CD8-positive, alpha-beta T cell (primary cell): ENCODE measurements at regions of chr17 and their contacts with region 1.

Region 1: DNA sequence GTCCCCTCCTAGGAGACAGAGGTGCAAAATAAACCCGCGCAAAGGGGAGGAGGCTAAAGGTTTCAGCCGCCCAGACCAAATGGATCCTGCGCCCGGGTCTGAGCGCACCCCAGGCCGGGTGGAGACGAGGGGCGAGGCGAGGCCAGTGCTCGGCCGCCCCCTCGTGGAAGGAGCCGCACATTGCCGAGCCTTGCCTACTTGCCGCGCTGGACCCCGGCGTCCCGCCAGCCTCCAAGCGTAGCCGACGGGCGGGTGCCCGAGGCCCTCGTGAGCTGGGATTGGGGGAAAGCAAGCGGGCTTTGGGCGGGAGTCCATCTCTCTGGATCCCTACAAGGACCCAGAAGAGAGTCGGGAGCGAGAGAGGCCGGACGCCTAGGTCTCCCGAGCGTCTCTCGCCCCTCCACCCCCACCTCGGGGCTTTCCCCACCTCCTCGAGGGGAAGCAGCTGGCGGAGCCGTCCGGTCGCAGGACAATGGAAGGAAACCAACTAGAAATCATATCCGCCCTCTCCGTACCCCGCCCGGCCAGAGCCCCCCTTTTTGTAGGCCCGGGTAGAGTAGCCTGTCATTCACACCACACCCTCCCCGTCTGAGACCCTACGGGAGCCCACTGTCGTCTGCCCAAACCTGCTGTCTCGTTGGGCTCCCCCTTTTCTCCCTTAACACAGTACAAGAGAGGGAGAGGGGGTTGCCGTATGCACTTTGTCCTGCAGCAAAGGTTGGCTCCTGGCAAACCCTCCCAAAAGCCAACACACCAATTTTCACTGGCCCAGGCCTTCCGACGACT is 664 bp upstream of the BCL6B start:
- DNase-seq: peak; percentile 58 to 88 (median 76)
- ATAC-seq: peak; percentile 61
- H3K4me3 ChIP-seq: peak overlapping the region; percentile 17 to 41
- H3K4me3 Mint-ChIP-seq: peak overlapping the region; percentile 74
- H3K27ac ChIP-seq: peak overlapping the region in 1 of 2 experiments; percentile 46
- H3K27ac Mint-ChIP-seq: peak overlapping the region; percentile 37
- H3K4me1 ChIP-seq: peaks cover 42% of the 10 kb centered on the region
- H3K4me1 Mint-ChIP-seq: peaks cover 46% of the 10 kb centered on the region
- H3K27me3 ChIP-seq: no peaks in the 10 kb centered on the region
- H3K27me3 Mint-ChIP-seq: peaks cover 3% of the 10 kb centered on the region
- CTCF ChIP-seq: peak; percentile 98

Region 2: DNA sequence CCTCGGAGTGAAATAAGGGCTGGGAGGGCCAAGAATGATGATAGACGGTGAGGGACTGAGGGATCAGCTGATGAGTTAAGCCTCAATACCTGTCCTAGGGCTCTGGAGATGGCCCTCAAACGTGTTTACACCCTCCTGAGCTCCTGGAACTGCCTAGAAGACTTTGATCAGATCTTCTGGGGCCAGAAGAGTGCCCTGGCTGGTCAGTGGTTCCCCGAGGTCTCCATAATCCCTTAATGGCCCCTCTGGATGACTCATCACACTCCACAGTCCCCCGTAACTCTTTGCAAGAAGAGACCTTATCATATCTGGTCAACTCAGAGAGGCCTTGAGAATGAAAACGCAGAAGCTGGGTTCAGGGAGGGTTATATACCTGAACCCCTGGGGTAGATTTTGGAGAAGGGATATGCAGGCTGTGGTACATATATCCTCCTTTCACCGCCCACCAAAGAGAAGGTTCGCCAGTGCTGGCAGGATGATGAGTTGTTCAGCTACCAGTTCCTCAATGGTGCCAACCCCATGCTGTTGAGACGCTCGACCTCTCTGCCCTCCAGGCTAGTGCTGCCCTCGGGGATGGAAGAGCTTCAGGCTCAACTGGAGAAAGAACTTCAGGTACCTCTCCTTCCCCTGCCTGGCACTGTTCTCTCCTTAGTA is 23.2 kb before region 1 on chr17:
- CTCF ChIA-PET with region 1: interaction called, 47 read pairs
- POLR2A ChIA-PET with region 1: interaction called, 4 read pairs
- intact Hi-C with region 1: no loop called
- DNase-seq: no peak
- ATAC-seq: no peak
- H3K4me3 ChIP-seq: no peak overlapping the region
- H3K4me3 Mint-ChIP-seq: no peak overlapping the region
- H3K27ac ChIP-seq: no peak overlapping the region
- H3K27ac Mint-ChIP-seq: no peak overlapping the region
- H3K4me1 ChIP-seq: no peaks in the 10 kb centered on the region
- H3K4me1 Mint-ChIP-seq: peaks cover 9% of the 10 kb centered on the region
- H3K27me3 ChIP-seq: no peaks in the 10 kb centered on the region
- H3K27me3 Mint-ChIP-seq: no peaks in the 10 kb centered on the region
- CTCF ChIP-seq: no peak

Region 3: GRCh38 chr17:7004398-7005253 is 17.6 kb before region 1 on chr17:
- CTCF ChIA-PET with region 1: interaction called, 47 read pairs
- POLR2A ChIA-PET with region 1: interaction called, 4 read pairs
- intact Hi-C with region 1: loop called in 1 of 2 experiments (anchors 1 kb)
- DNase-seq: peak in 3 of 9 experiments; percentile 47 to 85 (median 77)
- ATAC-seq: peak; percentile 98
- H3K4me3 ChIP-seq: no peak overlapping the region
- H3K4me3 Mint-ChIP-seq: no peak overlapping the region
- H3K27ac ChIP-seq: no peak overlapping the region
- H3K27ac Mint-ChIP-seq: no peak overlapping the region
- H3K4me1 ChIP-seq: no peaks in the 10 kb centered on the region
- H3K4me1 Mint-ChIP-seq: peaks cover 23% of the 10 kb centered on the region
- H3K27me3 ChIP-seq: no peaks in the 10 kb centered on the region
- H3K27me3 Mint-ChIP-seq: no peaks in the 10 kb centered on the region
- CTCF ChIP-seq: peak; percentile 78

Region 4: DNA sequence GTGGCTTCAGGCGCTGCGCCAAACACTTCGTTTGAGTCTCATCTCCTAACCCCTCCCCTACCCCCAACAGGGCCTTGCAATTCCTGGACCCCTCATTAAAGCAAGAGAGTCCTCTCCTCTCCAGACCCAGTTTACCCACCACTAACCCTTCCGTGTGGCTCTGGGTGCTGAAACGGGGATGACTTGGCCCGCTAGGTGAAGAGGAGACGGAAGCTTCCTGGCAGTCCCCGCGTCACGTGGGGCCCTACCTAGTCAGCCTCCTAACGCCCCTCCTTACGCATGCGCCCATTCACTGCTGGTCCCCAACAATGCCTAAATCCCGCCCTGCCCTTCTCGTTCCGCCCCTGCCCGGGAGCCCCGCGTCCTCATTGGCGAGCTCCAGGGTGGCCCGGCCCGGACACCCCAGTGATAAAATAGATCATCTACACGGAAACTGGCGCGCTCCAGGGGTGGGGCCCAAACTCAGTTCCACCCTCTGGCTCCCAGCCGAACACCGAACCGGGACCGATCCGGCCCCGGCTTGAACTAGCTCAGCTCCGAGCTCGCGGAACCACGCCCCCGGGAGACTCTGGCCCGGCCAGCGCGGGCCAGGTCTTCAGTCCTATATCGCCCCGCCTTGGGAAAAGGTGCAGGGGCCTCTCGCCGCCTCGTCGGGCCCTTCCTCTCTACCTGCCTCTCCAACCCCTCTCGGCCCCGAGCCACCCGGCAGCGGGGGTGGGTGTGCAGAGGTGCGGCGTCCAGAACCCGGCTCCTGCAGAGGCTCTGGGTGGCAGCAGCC is 13.6 kb after region 1 on chr17 and contains the start of gene SLC16A13:
- CTCF ChIA-PET with region 1: interaction called, 17 read pairs
- POLR2A ChIA-PET with region 1: interaction called, 15 read pairs
- intact Hi-C with region 1: loop called (anchors 1 kb)
- DNase-seq: peak; percentile 95 to 100 (median 98)
- ATAC-seq: peak; percentile 92
- H3K4me3 ChIP-seq: peak within 1 kb of the TSS; percentile 59 to 94
- H3K4me3 Mint-ChIP-seq: peak within 1 kb of the TSS; percentile 92
- H3K27ac ChIP-seq: peak within 1 kb of the TSS; percentile 85 to 98
- H3K27ac Mint-ChIP-seq: peak within 1 kb of the TSS; percentile 98
- H3K4me1 ChIP-seq: peaks cover 49% of the 10 kb centered on the region
- H3K4me1 Mint-ChIP-seq: peaks cover 50% of the 10 kb centered on the region
- H3K27me3 ChIP-seq: no peaks in the 10 kb centered on the region
- H3K27me3 Mint-ChIP-seq: no peaks in the 10 kb centered on the region
- CTCF ChIP-seq: no peak
- total RNA-seq, gene SLC16A13: 1.8 to 1.9 TPM